ENCODE measurements at regions of chr2 and their contacts with region 1.

Region 1: GRCh38 chr2:1581965-1582625 is 162.2 kb downstream of the PXDN start:
- DNase-seq: peak in 1 of 2 donors; percentile 24
- H3K4me3 ChIP-seq: peak overlapping the region in 1 of 3 donors; percentile 19
- H3K27ac ChIP-seq: peak overlapping the region in 1 of 2 donors; percentile 38
- H3K4me1 ChIP-seq: no peaks in the 10 kb centered on the region
- H3K27me3 ChIP-seq: no peaks in the 10 kb centered on the region
- CTCF ChIP-seq: no peak
- POLR2A ChIP-seq: no peak

Region 2: DNA sequence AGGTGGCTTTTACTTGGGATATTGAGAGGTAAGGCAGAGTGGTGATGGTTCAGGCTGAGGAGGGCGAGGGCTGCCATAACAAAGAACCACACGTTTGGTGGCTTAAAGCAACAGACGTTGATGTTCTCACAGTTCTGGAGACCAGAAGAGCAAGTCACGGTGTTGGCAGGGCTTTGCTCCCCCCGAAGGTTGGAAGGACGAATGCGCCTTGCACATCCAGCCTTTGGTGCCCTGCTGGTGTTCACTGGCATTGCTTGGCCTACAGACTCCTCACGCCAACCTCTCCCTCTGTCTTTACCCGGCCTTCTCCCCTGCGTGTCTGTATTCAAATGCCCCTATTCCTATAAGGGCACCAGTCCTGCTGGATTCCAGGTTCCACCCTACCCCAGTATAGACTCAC is 43.4 kb before region 1 on chr2:
- intact Hi-C with region 1: loop called (anchors 2 kb)
- DNase-seq: no peak
- H3K4me3 ChIP-seq: no peak overlapping the region
- H3K27ac ChIP-seq: no peak overlapping the region
- H3K4me1 ChIP-seq: no peaks in the 10 kb centered on the region
- H3K27me3 ChIP-seq: no peaks in the 10 kb centered on the region
- CTCF ChIP-seq: no peak
- POLR2A ChIP-seq: no peak

Measured in breast epithelium (tissue), 4 donors.